ENCODE measurements at regions of chr22 and their contacts with region 1.

Region 1: GRCh38 chr22:40024201-40025061 is 29.7 kb downstream of the FAM83F start:
- DNase-seq: peak; percentile 75
- ATAC-seq: peak; percentile 85
- H3K4me3 Mint-ChIP-seq: no peak overlapping the region
- H3K27ac Mint-ChIP-seq: no peak overlapping the region
- H3K4me1 Mint-ChIP-seq: peaks cover 4% of the 10 kb centered on the region
- H3K27me3 Mint-ChIP-seq: no peaks in the 10 kb centered on the region

Region 2: GRCh38 chr22:39553429-39553828 is 471.0 kb before region 1 on chr22:
- CTCF ChIA-PET with region 1: interaction called, 478 read pairs
- DNase-seq: no peak
- ATAC-seq: no peak
- H3K4me3 Mint-ChIP-seq: no peak overlapping the region
- H3K27ac Mint-ChIP-seq: no peak overlapping the region
- H3K4me1 Mint-ChIP-seq: peaks cover 6% of the 10 kb centered on the region
- H3K27me3 Mint-ChIP-seq: peaks cover 61% of the 10 kb centered on the region

Region 3: DNA sequence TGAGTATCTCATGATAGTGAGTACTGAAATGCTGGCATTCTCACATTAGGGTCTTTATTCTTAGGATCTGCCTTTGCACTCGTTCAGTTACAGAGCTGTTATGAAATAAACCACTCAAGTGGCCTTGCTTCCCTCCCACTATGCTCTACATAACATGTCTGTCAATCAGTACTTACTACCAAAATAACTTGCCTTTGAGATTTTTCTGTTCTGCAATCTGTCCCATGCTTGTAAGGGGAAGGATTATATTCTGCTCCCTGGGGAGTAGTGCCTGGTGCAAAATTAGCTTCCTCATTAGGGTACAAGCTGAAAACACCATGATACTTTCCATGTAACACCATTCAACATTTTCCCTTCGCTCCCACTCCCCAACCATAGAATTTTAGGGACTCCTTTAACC is 125.4 kb before region 1 on chr22:
- CTCF ChIA-PET with region 1: interaction called, 31 read pairs
- DNase-seq: no peak
- ATAC-seq: no peak
- H3K4me3 Mint-ChIP-seq: no peak overlapping the region
- H3K27ac Mint-ChIP-seq: peak overlapping the region; percentile 1
- H3K4me1 Mint-ChIP-seq: peaks cover 16% of the 10 kb centered on the region
- H3K27me3 Mint-ChIP-seq: no peaks in the 10 kb centered on the region

Region 4: GRCh38 chr22:39932918-39933649 is 91.3 kb before region 1 on chr22:
- CTCF ChIA-PET with region 1: interaction called, 21 read pairs
- DNase-seq: peak; percentile 87
- ATAC-seq: peak; percentile 59
- H3K4me3 Mint-ChIP-seq: peak overlapping the region; percentile 72
- H3K27ac Mint-ChIP-seq: peak overlapping the region; percentile 94
- H3K4me1 Mint-ChIP-seq: peaks cover 55% of the 10 kb centered on the region
- H3K27me3 Mint-ChIP-seq: no peaks in the 10 kb centered on the region

Region 5: GRCh38 chr22:39956932-39957664 is 67.3 kb before region 1 on chr22:
- CTCF ChIA-PET with region 1: interaction called, 12 read pairs
- DNase-seq: no peak
- ATAC-seq: no peak
- H3K4me3 Mint-ChIP-seq: no peak overlapping the region
- H3K27ac Mint-ChIP-seq: peak overlapping the region; percentile 30
- H3K4me1 Mint-ChIP-seq: peaks cover 91% of the 10 kb centered on the region
- H3K27me3 Mint-ChIP-seq: no peaks in the 10 kb centered on the region

Region 6: GRCh38 chr22:39973656-39974055 is 50.8 kb before region 1 on chr22:
- CTCF ChIA-PET with region 1: no interaction called
- DNase-seq: no peak
- ATAC-seq: no peak
- H3K4me3 Mint-ChIP-seq: no peak overlapping the region
- H3K27ac Mint-ChIP-seq: no peak overlapping the region
- H3K4me1 Mint-ChIP-seq: peaks cover 3% of the 10 kb centered on the region
- H3K27me3 Mint-ChIP-seq: no peaks in the 10 kb centered on the region

Region 7: GRCh38 chr22:40009292-40009769 is 15.1 kb before region 1 on chr22:
- CTCF ChIA-PET with region 1: interaction called, 22 read pairs
- DNase-seq: no peak
- ATAC-seq: no peak
- H3K4me3 Mint-ChIP-seq: no peak overlapping the region
- H3K27ac Mint-ChIP-seq: no peak overlapping the region
- H3K4me1 Mint-ChIP-seq: no peaks in the 10 kb centered on the region
- H3K27me3 Mint-ChIP-seq: peaks cover 55% of the 10 kb centered on the region

Region 8: GRCh38 chr22:40044102-40044869 is 19.9 kb after region 1 on chr22:
- CTCF ChIA-PET with region 1: interaction called, 14 read pairs
- DNase-seq: peak; percentile 99
- ATAC-seq: peak; percentile 90
- H3K4me3 Mint-ChIP-seq: peak overlapping the region; percentile 84
- H3K27ac Mint-ChIP-seq: peak overlapping the region; percentile 97
- H3K4me1 Mint-ChIP-seq: peaks cover 37% of the 10 kb centered on the region
- H3K27me3 Mint-ChIP-seq: peaks cover 6% of the 10 kb centered on the region